Pancreas (tissue), 10 donors: ENCODE measurements at regions of chr14 and their contacts with region 1.

Region 1: DNA sequence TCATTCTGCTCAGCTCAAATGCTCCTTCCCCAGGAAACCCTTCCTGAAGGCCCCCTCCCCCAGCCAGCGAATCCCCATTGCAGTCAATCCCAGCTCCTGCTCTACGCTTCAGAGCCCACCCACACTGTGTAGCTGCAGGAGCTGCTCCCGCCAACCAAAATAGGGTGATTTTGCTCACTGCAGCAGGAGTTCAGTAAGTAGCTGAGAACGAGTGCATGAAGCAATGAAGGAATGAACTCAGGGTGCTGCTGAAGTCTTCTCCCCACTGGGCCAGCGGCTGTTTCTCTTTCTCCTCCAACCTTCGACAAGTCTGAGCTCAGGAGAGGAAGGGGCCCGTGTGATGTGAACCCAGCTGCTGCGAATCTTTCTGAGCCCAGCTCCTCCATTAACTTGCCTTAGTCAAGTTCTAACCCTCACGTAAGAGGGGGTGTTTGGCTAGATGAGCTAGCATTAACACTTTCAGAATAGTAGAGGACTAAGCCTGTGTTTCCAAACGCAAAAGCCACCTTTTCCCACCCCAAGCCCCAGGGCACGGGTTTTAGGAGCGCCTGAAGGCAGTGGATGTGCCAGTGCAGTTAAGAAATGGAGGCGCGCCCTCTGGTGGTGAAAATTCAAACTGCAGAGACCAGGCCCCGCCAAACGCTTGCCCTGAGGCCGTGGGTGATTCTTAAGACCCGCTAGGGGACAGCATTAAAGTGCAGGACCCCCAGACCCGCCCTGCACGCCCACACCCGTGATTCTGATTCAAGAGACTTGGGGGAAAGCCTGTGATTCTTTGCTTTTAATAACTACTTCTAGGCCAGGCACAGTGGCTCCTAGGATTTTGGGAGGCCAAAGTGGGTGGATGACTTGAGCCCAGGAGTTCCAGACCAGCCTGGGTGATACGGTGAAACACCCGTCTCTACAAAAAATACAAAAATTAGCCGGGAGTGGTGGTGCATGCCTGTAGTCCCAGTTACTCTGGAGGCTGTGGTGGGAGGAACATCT is 11.9 kb upstream of the SERPINA4 start:
- DNase-seq: peak in 4 of 6 donors; percentile 30 to 92 (median 72)
- ATAC-seq: peak; percentile 82 to 96 (median 90)
- H3K4me3 ChIP-seq: no peak overlapping the region
- H3K27ac ChIP-seq: no peak overlapping the region
- H3K4me1 ChIP-seq: no peaks in the 10 kb centered on the region
- H3K27me3 ChIP-seq: no peaks in the 10 kb centered on the region
- CTCF ChIP-seq: peak; percentile 90 to 97 (median 93)

Region 2: GRCh38 chr14:94448071-94448808 is 101.1 kb before region 1 on chr14:
- intact Hi-C with region 1: loop called in 1 of 3 experiments (anchors 10 kb)
- DNase-seq: peak in 1 of 6 donors; percentile 16
- ATAC-seq: peak in 3 of 4 donors; percentile 41 to 71 (median 49)
- H3K4me3 ChIP-seq: no peak overlapping the region
- H3K27ac ChIP-seq: no peak overlapping the region
- H3K4me1 ChIP-seq: no peaks in the 10 kb centered on the region
- H3K27me3 ChIP-seq: no peaks in the 10 kb centered on the region
- CTCF ChIP-seq: no peak